Dendritic cell treated with granulocyte-macrophage colony-stimulating factor and Interleukin-4, amounts not matched to agents 40 ng/mL and 50 ng/mL, for 4 days (primary cell): ENCODE measurements at regions of chr17 and their contacts with region 1.

Region 1: DNA sequence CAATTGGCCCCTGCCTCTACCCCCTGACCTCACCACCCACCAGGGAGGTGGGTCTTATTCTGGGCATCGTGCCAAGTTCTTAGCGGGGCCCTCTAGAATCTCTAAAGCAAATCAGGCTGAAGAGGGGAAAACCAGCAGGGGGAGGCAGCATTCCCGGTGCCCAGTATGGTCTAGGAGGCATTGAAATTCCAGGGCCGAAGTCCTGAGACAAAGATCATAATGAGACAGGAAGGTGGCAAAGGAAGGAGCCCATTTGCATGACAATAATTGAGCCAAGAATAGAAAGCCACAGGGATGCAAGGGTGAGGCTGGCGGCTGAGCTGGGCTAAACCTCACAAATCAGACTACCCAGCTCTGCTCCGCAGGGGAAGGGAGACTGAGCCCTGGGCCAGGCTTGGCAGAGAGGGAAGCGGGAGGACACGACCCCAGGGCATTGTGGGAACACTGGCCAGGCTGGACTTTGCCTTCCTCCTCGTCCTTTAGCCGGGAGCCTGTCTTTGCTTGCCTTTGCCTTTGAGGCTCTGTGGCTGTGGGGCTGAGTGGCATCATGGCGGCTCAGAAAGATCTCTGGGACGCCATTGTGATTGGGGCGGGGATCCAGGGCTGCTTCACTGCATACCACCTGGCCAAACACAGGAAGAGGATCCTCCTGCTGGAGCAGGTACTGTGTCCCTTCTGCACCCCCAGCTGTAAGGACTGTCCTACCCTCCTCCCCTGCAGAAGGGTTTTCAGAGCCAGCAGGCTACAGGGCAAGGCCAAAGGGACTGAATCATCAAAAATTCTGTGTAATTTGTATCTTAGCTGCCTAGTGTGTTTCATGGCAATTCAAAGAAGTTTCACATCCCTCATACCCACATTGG is at the start of gene PIPOX:
- H3K4me3 Mint-ChIP-seq: peak within 1 kb of the TSS; percentile 70
- H3K27ac Mint-ChIP-seq: peak within 1 kb of the TSS; percentile 95
- H3K4me1 Mint-ChIP-seq: peaks cover 68% of the 10 kb centered on the region
- H3K27me3 Mint-ChIP-seq: no peaks in the 10 kb centered on the region

Region 2: GRCh38 chr17:28982131-28982951 is 60.6 kb before region 1 on chr17:
- intact Hi-C with region 1: no loop called
- H3K4me3 Mint-ChIP-seq: peak overlapping the region; percentile 4
- H3K27ac Mint-ChIP-seq: peak overlapping the region; percentile 84
- H3K4me1 Mint-ChIP-seq: peaks cover 43% of the 10 kb centered on the region
- H3K27me3 Mint-ChIP-seq: peaks cover 31% of the 10 kb centered on the region

Region 3: GRCh38 chr17:29078183-29079045 is 35.5 kb after region 1 on chr17:
- intact Hi-C with region 1: loop called (anchors 5 kb)
- H3K4me3 Mint-ChIP-seq: no peak overlapping the region
- H3K27ac Mint-ChIP-seq: peak overlapping the region; percentile 73
- H3K4me1 Mint-ChIP-seq: peaks cover 44% of the 10 kb centered on the region
- H3K27me3 Mint-ChIP-seq: no peaks in the 10 kb centered on the region

Region 4: GRCh38 chr17:29100296-29100695 is 57.4 kb after region 1 on chr17:
- intact Hi-C with region 1: no loop called
- H3K4me3 Mint-ChIP-seq: no peak overlapping the region
- H3K27ac Mint-ChIP-seq: no peak overlapping the region
- H3K4me1 Mint-ChIP-seq: peaks cover 30% of the 10 kb centered on the region
- H3K27me3 Mint-ChIP-seq: no peaks in the 10 kb centered on the region

Region 5: GRCh38 chr17:29111816-29112499 is 69.0 kb after region 1 on chr17:
- intact Hi-C with region 1: loop called (anchors 5 kb)
- H3K4me3 Mint-ChIP-seq: peak overlapping the region; percentile 28
- H3K27ac Mint-ChIP-seq: peak overlapping the region; percentile 80
- H3K4me1 Mint-ChIP-seq: peaks cover 97% of the 10 kb centered on the region
- H3K27me3 Mint-ChIP-seq: no peaks in the 10 kb centered on the region